Cardiac septum (tissue), 1 donor: ENCODE measurements at regions of chr1 and their contacts with region 1.

Region 1: DNA sequence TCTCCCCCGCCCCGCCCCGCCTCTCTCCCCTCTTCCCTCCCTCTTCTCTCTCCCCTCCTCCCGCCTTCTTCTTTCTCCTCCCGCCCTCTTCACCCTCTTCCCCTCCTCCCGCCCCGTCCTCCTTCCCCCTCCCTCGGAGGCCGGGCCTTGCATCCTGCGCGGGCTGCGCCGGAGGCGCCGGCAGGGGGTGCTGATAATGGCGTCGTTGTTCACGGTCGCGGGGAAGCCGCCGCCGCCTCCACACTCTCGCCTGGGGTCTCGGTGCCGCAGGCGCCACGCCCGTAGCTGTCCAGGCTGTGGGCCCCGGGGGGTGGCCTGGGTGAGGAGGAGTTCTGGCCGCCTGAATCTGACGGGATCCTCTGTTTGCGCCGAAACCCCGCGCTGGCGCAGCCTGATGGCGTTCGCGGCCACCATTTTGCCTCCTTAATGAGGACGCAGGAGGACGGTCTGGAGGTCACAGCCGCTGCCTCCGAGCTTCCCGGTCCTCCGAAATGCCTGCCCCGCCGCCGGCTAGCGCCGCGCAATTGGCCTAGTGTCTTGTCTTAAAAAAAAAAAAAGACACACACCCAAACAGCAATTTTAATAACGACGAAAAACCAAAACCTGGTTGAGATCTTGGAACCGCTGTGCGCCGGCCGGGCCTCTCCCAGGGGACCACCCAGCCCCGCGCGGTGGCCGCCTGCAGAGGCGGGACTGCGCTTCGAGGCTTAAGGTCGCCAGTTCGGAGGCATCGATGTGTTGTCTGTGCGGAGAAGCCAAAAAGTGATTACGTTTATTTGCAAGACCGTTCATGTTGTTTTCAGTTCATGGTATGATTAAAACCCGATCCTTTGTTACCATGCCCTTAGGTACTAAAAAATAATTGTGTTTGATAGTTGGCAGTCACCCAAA is 106.6 kb upstream of the HNRNPU start:
- DNase-seq: peak; percentile 96

Region 2: DNA sequence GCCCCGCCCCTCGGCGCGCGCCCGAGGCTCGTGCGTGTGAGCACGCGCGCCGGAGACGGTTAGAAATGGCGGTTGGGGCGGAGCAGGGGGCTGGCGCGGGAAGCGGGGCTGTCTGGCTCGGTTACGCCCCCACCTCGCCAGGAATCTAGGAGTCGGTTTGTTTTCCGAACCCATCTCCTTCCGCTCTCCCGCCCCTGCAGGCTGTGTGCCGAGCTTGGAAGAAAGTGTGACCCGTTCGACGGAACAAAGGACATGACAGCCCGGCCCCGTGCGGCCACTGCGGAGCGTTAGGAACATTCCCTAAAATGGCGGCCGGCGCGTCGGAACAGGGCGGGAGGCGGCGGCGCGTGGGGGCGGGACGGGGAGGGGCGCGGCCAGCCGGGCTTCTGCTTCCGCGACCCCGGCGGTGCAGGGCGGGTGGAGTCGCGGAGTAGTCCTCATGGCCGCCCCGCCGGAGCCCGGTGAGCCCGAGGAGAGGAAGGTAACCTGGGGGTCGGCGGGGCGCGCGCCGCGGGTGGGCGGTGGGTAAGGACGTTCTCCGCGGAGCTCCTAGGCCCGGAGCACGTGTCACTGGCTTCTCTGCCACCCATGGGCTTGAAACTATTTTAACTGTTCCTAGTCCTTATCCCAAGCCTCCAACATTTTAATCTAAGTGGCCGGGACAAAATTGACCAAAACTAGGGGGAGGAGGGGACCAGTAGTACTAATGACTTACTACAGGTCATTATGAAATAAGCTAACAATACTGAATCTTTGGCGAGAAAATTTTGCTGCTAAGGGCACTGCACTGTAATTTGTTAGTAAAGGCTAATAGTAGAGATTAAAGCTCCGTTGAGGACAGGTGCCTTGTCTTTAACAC is 135.4 kb before region 1 on chr1 and contains the start of gene COX20:
- intact Hi-C with region 1: loop called (anchors 1 kb)
- DNase-seq: peak; percentile 94
- total RNA-seq, gene COX20: 83.7 TPM

Region 3: DNA sequence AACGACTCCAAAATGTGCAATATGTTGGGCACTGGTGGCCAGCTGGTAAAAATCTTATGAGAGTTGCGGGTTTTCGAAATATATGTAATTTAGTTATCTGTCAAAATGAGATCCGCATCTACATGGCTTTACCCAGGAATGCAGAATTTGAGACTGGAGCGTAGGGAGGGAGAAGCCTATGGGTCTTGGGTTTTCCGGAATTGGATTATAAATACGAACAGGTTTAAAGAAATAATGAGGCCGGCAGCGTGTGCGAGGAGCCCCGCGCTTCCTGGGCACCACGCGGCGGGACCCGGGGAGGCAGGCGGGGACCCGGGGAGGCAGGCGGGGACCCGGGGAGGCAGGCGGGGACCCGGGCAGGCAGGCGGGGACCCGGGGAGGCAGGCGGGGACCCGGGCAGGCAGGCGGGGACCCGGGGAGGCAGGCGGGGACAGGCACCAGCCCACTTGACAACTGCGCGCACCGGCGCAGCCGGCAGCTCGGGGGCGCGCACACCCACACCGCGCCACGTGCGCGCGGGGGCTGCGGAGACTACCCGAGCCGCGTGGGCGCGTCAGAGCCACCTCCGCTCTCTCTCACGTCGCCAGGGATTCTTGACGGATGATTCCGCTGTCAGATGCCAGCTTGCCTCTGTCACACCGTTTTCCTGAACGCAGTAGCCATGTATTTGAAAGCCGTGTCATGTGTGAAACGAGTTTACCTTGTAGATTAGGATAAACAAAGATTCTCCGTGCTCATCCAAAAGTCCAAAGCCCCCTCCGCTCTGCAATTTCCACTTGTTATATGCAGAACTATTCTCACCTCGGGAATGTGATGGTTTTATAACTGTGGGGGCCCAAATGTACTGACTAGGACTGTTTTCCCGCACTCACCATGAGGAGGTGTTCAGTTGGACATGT is 52.2 kb before region 1 on chr1:
- intact Hi-C with region 1: loop called (anchors 5 kb)
- DNase-seq: peak; percentile 83